ENCODE measurements at regions of chr18 and their contacts with region 1.

Region 1: DNA sequence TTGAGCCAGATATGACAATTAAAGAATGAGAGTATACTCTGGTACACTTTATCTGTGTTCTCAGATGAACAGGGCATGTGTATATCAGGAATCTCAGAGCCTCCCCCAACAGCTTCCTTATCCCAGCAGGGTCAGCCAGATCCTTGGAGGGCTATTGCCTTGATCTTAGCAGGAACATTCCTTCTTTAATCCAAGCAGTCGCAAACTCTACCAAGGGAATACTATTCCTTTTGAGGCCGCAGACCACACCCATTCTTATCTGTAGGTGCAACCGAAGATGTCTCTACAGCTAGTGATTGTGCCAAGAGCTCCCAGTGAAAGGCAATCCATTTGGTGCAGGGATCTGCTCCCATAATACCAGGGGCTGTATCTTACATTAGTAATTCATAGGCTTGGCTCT is 118.3 kb upstream of the DOK6 start:
- DNase-seq: no peak
- CTCF ChIP-seq: no peak

Region 2: GRCh38 chr18:69261436-69261835 is 20.9 kb before region 1 on chr18:
- CTCF ChIA-PET with region 1: interaction called, 11 read pairs
- POLR2A ChIA-PET with region 1: no interaction called
- DNase-seq: no peak
- CTCF ChIP-seq: no peak